GM12878 (cell line): ENCODE measurements at regions of chr6 and their contacts with region 1.

Region 1: GRCh38 chr6:83057705-83058321 is 7.8 kb downstream of the UBE3D start:
- DNase-seq: no peak
- ATAC-seq: peak; percentile 92
- H3K4me3 ChIP-seq: no peak overlapping the region
- H3K27ac ChIP-seq: no peak overlapping the region
- H3K4me1 ChIP-seq: no peaks in the 10 kb centered on the region; the same call in 1 of the 2 replicates
- H3K27me3 ChIP-seq: no peaks in the 10 kb centered on the region
- CTCF ChIP-seq: peak; percentile 79 to 87 (median 81)
- EP300 ChIP-seq: no peak
- POLR2A ChIP-seq: no peak
- RAD21 ChIP-seq: peak; percentile 84

Region 2: GRCh38 chr6:81890846-81891245 is 1167.0 kb before region 1 on chr6:
- CTCF ChIA-PET with region 1: no interaction called
- POLR2A ChIA-PET with region 1: no interaction called
- RAD21 ChIA-PET with region 1: no interaction called
- SMC1A ChIA-PET with region 1: no interaction called
- in situ Hi-C with region 1: no loop called
- intact Hi-C with region 1: no loop called
- DNase-seq: no peak
- ATAC-seq: no peak
- H3K4me3 ChIP-seq: no peak overlapping the region
- H3K27ac ChIP-seq: no peak overlapping the region
- H3K4me1 ChIP-seq: no peaks in the 10 kb centered on the region
- H3K27me3 ChIP-seq: no peaks in the 10 kb centered on the region
- CTCF ChIP-seq: no peak
- EP300 ChIP-seq: no peak
- POLR2A ChIP-seq: no peak
- RAD21 ChIP-seq: no peak

Region 3: DNA sequence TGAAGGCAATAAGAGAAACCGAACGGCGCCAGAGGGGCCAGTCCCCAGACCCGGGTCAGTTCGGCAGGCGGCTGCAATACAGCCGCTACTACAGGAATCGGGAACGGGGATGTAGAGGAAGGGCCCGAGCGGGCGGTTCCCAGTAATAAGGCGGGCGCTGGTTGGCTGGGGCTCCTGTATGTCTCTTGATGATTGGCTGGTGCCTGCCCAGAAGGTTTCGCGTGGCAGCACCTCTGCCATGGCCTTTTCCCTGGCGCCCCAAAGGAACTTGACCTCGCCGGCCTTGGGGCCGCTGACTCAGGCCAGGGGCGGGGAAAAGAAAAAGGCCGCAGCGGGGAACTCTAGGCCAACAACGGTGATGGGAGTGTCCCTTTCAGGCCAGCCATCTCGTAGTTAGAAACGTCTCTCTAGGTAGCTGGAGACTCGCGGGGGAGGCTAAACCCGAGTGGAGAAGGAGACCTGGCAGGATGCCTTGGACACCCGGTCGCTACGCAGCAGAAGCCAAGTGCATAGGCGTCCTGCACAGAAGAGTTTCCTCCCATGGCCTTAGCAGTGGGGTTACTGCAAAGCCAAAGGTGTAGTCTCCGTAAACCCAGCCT is 810.1 kb before region 1 on chr6 and contains the start of gene IBTK:
- CTCF ChIA-PET with region 1: interaction called, 18 read pairs
- POLR2A ChIA-PET with region 1: interaction called, 3 read pairs
- RAD21 ChIA-PET with region 1: interaction called, 3 read pairs
- SMC1A ChIA-PET with region 1: interaction called, 4 read pairs
- in situ Hi-C with region 1: loop called (anchors 5 kb)
- intact Hi-C with region 1: loop called (anchors 2 kb)
- DNase-seq: peak; percentile 69
- ATAC-seq: peak; percentile 89
- H3K4me3 ChIP-seq: peak within 1 kb of the TSS; percentile 76
- H3K27ac ChIP-seq: peak within 1 kb of the TSS; percentile 76
- H3K4me1 ChIP-seq: peaks cover 6% of the 10 kb centered on the region; the same call in 1 of the 2 replicates
- H3K27me3 ChIP-seq: no peaks in the 10 kb centered on the region
- CTCF ChIP-seq: no peak
- EP300 ChIP-seq: no peak
- POLR2A ChIP-seq: peak; percentile 77
- RAD21 ChIP-seq: no peak
- polyA plus RNA-seq, gene IBTK: 12.0 to 16.6 TPM

Region 4: DNA sequence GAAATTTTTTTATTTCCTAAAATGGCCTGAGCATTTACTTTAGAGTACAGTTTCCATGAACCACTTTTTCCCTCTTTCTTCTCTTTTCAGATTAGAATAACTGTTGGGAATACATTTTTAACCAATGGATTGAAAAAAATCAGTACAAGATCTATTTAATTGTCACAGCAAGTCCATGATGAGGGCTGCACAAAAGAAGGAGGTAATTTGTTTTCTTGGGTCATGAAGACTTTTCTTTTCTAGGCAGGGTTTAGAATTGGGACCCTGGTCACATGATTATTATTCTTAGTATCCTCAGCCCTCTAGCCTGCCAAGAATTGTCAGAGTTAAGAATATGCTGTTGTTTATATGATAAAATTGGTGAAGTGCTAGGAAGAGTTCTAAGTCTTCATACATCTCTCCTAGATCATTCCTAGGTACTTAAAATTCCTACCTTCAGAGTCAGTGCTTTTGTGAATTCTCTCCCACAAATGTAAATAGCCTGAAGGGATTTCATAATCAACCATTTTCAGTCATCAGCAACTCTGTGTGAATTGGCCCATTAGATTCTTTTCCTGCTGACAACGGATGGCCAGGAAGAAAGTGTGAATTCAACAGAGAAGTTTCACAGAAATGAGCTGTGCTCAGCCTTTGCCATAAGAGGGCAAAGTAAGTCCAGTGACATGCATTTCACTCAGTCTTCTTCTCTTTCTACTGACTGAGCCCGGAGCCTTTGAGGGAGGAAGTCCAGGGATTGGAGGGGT is 726.6 kb before region 1 on chr6:
- CTCF ChIA-PET with region 1: interaction called, 4 read pairs
- POLR2A ChIA-PET with region 1: no interaction called
- RAD21 ChIA-PET with region 1: no interaction called
- SMC1A ChIA-PET with region 1: no interaction called
- in situ Hi-C with region 1: no loop called
- intact Hi-C with region 1: loop called (anchors 1 kb)
- DNase-seq: no peak
- ATAC-seq: peak; percentile 46; the same call in 2 of the 3 replicates
- H3K4me3 ChIP-seq: no peak overlapping the region
- H3K27ac ChIP-seq: no peak overlapping the region
- H3K4me1 ChIP-seq: no peaks in the 10 kb centered on the region
- H3K27me3 ChIP-seq: no peaks in the 10 kb centered on the region
- CTCF ChIP-seq: peak in 2 of 3 experiments; percentile 30 to 44; a peak in 4 of 6 replicates
- EP300 ChIP-seq: no peak
- POLR2A ChIP-seq: no peak
- RAD21 ChIP-seq: peak; percentile 53

Region 5: DNA sequence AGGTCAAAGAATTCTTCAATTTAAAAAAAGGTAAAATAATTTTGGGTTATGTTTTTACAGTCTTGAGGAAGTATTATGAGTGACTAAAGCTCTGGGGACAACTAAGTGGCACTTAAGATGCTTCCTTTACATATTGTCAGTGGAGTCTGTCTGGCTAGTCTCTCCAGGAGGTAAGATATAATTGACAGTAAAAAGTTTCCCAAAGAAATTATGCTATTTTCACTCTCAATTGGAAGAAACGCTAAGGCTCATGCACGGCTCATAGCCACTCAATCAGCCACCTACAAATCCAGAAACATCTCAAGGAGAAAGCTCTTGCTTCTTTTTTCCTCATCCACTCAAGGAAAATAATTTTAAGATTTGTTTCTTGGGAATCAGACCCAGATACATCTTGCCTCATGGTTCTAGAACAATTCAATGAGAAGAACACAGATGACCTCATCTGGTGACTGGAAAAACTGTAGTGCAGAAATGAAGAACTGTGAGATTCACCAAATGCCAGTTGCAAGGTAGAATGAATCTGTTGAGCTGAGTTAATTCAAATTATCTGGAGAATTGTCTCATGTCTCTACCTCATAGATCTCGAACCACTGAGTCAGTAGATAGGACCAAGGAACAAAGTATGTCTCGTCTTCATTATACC is 441.3 kb before region 1 on chr6:
- CTCF ChIA-PET with region 1: no interaction called
- POLR2A ChIA-PET with region 1: no interaction called
- RAD21 ChIA-PET with region 1: no interaction called
- SMC1A ChIA-PET with region 1: no interaction called
- in situ Hi-C with region 1: loop called (anchors 10 kb)
- intact Hi-C with region 1: no loop called
- DNase-seq: no peak
- ATAC-seq: no peak
- H3K4me3 ChIP-seq: no peak overlapping the region
- H3K27ac ChIP-seq: no peak overlapping the region
- H3K4me1 ChIP-seq: no peaks in the 10 kb centered on the region
- H3K27me3 ChIP-seq: no peaks in the 10 kb centered on the region
- CTCF ChIP-seq: peak in 1 of 3 experiments; percentile 8; a peak in 1 of 6 replicates
- EP300 ChIP-seq: no peak
- POLR2A ChIP-seq: no peak
- RAD21 ChIP-seq: peak; percentile 40

Region 6: DNA sequence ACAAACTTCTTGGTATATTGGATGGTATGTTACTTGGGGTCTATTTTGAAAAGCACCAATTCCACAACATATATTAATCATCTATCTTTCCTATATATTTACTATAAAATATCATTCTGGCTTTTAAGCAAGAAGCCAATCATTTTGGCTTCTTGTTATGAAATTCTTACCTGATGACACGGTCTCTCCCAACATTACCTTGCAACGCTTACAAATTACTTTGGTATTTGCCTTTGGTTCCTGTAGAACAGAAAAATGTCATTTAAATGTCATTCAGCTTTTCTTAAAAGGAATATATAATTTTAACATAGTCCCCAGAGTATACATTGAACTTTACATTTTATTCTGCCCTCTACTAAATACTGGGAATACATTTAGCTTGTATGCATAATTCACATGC is 19.6 kb before region 1 on chr6:
- CTCF ChIA-PET with region 1: interaction called, 12 read pairs
- POLR2A ChIA-PET with region 1: no interaction called
- RAD21 ChIA-PET with region 1: no interaction called
- SMC1A ChIA-PET with region 1: no interaction called
- in situ Hi-C with region 1: no loop called
- intact Hi-C with region 1: no loop called
- DNase-seq: no peak
- ATAC-seq: no peak
- H3K4me3 ChIP-seq: no peak overlapping the region
- H3K27ac ChIP-seq: no peak overlapping the region
- H3K4me1 ChIP-seq: no peaks in the 10 kb centered on the region
- H3K27me3 ChIP-seq: no peaks in the 10 kb centered on the region
- CTCF ChIP-seq: no peak
- EP300 ChIP-seq: no peak
- POLR2A ChIP-seq: no peak
- RAD21 ChIP-seq: no peak

Region 7: GRCh38 chr6:83108378-83108777 is 50.6 kb after region 1 on chr6:
- CTCF ChIA-PET with region 1: no interaction called
- POLR2A ChIA-PET with region 1: no interaction called
- RAD21 ChIA-PET with region 1: no interaction called
- SMC1A ChIA-PET with region 1: no interaction called
- in situ Hi-C with region 1: no loop called
- intact Hi-C with region 1: no loop called
- DNase-seq: no peak
- ATAC-seq: no peak
- H3K4me3 ChIP-seq: no peak overlapping the region
- H3K27ac ChIP-seq: no peak overlapping the region
- H3K4me1 ChIP-seq: no peaks in the 10 kb centered on the region
- H3K27me3 ChIP-seq: no peaks in the 10 kb centered on the region
- CTCF ChIP-seq: no peak
- EP300 ChIP-seq: no peak
- POLR2A ChIP-seq: no peak
- RAD21 ChIP-seq: no peak

Region 8: DNA sequence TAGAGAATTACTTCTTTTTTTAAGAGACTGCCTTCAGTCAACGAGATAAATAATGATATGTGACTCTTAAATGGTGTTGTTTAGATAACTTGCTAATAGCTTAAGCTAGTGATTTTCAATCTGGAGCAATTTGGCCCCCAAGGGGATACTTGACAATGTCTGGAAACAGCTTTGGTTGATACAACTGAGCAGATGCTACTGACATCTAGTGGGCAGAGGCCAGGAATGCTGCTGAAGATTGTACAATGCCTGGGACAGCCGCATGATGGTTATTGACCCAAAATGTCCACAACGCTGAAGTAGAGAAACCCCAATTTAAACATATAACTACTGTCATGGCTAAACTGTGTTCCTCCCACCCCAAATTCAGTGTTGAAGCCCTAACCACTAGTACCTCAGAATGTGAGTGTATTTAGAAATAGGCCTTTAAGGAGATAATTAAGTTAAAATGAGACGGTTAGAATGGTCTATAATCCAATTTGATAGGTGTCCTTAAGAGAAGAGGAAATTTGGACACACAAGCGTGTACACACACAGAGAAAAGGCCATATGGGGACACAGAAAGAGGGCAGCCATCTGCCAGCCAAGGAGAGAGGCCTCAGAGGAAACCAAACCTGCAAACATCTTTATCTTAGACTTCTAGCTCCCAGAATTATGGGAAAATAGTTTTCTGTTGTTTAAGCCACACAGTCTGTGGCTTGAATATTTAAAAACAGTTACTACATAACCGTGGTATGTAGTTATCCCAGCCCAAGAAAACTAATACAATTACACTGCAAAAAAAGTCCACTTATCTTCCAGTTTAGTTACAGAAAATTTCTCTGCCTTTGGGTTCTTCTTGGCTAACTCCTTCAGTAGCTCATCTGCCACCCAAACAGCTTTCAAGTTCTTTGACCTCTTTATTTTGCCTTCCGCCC is 157.6 kb after region 1 on chr6:
- CTCF ChIA-PET with region 1: interaction called, 635 read pairs
- POLR2A ChIA-PET with region 1: no interaction called
- RAD21 ChIA-PET with region 1: interaction called, 8 read pairs
- SMC1A ChIA-PET with region 1: interaction called, 8 read pairs
- in situ Hi-C with region 1: no loop called
- intact Hi-C with region 1: no loop called
- DNase-seq: peak; percentile 40
- ATAC-seq: peak; percentile 99
- H3K4me3 ChIP-seq: no peak overlapping the region
- H3K27ac ChIP-seq: no peak overlapping the region
- H3K4me1 ChIP-seq: no peaks in the 10 kb centered on the region
- H3K27me3 ChIP-seq: no peaks in the 10 kb centered on the region
- CTCF ChIP-seq: peak; percentile 81 to 91 (median 90)
- EP300 ChIP-seq: no peak
- POLR2A ChIP-seq: no peak
- RAD21 ChIP-seq: peak; percentile 91

Region 9: DNA sequence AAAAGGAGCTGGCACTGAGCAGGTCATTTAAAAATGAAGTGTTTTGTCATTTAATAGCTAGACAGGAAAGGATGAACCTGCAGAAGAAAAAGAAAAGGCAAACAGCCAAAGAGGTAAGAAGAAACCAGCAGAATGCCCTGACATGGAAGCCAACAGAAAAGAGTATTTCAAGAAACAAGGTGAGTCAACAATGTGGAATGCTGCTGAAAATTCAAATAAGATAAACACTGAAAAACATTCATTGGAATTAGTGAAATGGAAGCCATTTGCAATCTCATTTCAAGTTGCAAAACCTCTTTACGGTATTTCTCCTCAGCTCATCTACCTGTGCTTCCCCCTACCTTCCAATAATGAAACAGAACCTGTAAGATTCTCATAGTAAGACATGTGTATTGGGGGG is 194.9 kb after region 1 on chr6:
- CTCF ChIA-PET with region 1: no interaction called
- POLR2A ChIA-PET with region 1: no interaction called
- RAD21 ChIA-PET with region 1: no interaction called
- SMC1A ChIA-PET with region 1: no interaction called
- in situ Hi-C with region 1: no loop called
- intact Hi-C with region 1: no loop called
- DNase-seq: no peak
- ATAC-seq: no peak
- H3K4me3 ChIP-seq: no peak overlapping the region
- H3K27ac ChIP-seq: no peak overlapping the region
- H3K4me1 ChIP-seq: no peaks in the 10 kb centered on the region
- H3K27me3 ChIP-seq: no peaks in the 10 kb centered on the region
- CTCF ChIP-seq: no peak
- EP300 ChIP-seq: no peak
- POLR2A ChIP-seq: no peak
- RAD21 ChIP-seq: no peak